ENCODE measurements at regions of chr13 and their contacts with region 1.

Region 1: DNA sequence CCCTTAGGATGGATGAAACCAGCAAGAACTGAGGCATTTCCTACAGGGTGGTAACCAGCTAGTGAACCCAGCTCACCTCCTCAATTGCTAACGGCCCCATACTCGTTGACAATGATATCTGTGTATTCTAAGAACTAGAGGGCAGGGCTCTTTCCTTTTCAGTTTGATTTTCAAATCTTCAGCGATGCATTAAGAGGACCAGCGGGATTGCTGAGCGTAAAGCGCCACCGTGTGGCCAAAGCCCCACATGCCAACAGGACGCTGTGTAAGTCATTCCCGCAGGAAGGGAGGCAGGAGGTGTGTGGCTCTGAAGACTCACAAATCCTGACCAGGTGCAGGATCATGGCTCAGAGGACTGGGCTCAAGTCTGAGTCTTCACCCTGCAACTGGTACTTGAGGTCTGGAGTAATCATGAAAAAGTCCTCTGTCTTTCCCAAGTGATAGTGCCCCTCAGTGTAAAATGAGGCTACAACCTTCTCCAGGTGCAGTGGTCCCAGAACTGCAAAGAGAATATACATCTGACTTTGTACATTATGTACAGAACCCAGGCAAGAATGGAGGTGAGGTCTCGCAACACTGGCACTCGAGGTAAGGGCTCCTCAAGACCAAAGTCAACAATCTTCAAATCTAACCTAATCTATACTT is 40.9 kb downstream of the C13orf42 start:
- DNase-seq: peak; percentile 71 to 95
- H3K4me3 ChIP-seq: no peak overlapping the region
- CTCF ChIP-seq: peak in 1 of 3 donors; percentile 20
- POLR2A ChIP-seq: no peak

Region 2: GRCh38 chr13:49985129-49985528 is 1085.0 kb before region 1 on chr13:
- intact Hi-C with region 1: loop called (anchors 10 kb)
- DNase-seq: no peak
- H3K4me3 ChIP-seq: no peak overlapping the region
- CTCF ChIP-seq: no peak
- POLR2A ChIP-seq: no peak

Region 3: GRCh38 chr13:51781246-51782022 is 711.3 kb after region 1 on chr13:
- intact Hi-C with region 1: no loop called
- DNase-seq: no peak
- H3K4me3 ChIP-seq: no peak overlapping the region
- CTCF ChIP-seq: no peak
- POLR2A ChIP-seq: no peak